A673 (cell line): ENCODE measurements at regions of chr1 and their contacts with region 1.

Region 1: DNA sequence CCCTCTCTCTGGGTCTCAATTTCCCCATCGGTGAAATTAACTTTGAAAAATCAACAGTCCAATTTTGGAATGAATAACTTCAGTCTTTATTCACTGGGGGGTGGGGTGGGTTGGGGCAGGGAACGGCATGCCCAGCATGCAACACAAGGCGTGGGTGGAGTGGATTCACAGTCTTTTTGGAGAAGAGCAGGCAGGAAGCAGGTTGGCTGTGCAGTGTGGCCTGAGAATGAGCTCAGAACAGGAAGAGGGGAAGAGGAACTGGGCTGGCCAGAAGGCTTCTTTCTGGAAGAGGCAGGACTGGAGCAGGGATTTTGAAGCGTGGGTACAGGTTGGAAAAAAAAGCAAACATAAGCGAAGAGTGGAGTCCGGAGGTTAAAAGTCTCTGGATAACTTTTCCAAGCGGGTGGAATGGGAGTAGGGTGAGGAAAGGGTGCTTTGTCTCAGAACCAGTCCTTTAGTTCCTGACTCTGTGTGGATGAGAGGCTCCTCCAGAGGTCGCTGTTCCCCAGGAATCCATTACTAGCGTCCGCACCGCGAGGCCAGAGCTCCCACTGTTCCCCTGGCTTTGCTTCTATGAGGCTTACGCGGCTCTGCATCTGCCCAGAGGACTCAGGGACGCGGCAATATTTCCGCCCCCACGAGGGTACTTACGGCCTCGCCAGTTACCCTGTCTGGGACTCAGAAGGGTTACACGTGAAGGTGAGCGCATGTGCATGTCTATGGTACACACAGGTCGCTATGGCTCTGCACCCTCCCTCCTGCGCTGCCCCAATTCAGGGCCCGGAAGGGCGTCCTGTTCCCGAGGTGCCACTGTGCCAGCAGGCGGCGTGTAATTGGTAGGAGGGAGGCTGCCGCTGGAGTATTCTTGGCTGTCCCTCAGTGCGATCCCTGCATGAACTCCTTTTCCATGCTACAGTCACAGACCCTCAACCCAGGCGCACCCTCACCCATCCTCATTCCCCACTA is 5.5 kb upstream of the FOXD2 start:
- DNase-seq: peak; percentile 87
- H3K4me3 ChIP-seq: no peak overlapping the region
- H3K27ac ChIP-seq: no peak overlapping the region
- H3K4me1 ChIP-seq: peaks cover 32% of the 10 kb centered on the region
- H3K27me3 ChIP-seq: peaks cover 6% of the 10 kb centered on the region
- CTCF ChIP-seq: peak; percentile 91

Region 2: DNA sequence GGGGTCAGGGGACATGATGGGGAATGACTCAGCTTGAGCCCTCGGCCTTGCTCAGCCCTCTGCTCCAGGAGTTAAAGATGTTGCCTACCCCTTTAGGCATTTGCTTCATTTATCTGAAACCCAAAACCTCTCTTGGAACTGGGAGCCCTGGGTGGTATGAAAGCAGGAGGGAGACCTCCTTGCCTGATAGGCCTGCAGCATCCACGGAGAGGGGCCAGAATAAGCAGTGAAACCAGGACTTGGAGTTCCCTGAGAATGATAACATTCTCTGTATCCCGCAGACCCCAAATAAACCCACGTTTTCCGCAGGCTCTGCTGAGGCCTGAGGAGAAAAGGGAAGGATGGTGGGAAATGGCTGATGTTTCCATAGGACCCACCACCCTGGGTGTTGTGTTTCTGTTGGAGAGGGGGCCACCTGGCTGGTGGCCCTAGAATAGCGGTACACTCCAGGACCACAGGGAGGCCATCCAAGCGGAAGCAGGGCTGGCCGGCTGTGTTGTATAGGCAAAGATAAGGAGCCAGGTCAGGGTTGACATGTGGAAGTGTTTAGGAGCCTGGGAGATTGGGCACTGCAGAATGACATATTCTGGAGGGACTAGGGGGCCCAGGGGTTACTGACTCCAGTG is 82.9 kb after region 1 on chr1:
- CTCF ChIA-PET with region 1: no interaction called
- POLR2A ChIA-PET with region 1: no interaction called
- intact Hi-C with region 1: no loop called
- DNase-seq: no peak
- H3K4me3 ChIP-seq: no peak overlapping the region
- H3K27ac ChIP-seq: no peak overlapping the region
- H3K4me1 ChIP-seq: no peaks in the 10 kb centered on the region
- H3K27me3 ChIP-seq: peaks cover 24% of the 10 kb centered on the region
- CTCF ChIP-seq: no peak

Region 3: GRCh38 chr1:47710329-47711071 is 278.1 kb after region 1 on chr1:
- CTCF ChIA-PET with region 1: interaction called, 44 read pairs
- POLR2A ChIA-PET with region 1: no interaction called
- intact Hi-C with region 1: loop called (anchors 1 kb)
- DNase-seq: peak; percentile 58
- H3K4me3 ChIP-seq: peak overlapping the region; percentile 34
- H3K27ac ChIP-seq: no peak overlapping the region
- H3K4me1 ChIP-seq: peaks cover 17% of the 10 kb centered on the region
- H3K27me3 ChIP-seq: peaks cover 95% of the 10 kb centered on the region
- CTCF ChIP-seq: peak; percentile 97

Region 4: GRCh38 chr1:47725992-47726855 is 293.9 kb after region 1 on chr1:
- CTCF ChIA-PET with region 1: interaction called, 74 read pairs
- POLR2A ChIA-PET with region 1: no interaction called
- intact Hi-C with region 1: loop called (anchors 1 kb)
- DNase-seq: peak; percentile 81
- H3K4me3 ChIP-seq: no peak overlapping the region
- H3K27ac ChIP-seq: no peak overlapping the region
- H3K4me1 ChIP-seq: no peaks in the 10 kb centered on the region
- H3K27me3 ChIP-seq: peaks cover 33% of the 10 kb centered on the region
- CTCF ChIP-seq: peak; percentile 91